ENCODE measurements at regions of chr22 and their contacts with region 1.

Region 1: DNA sequence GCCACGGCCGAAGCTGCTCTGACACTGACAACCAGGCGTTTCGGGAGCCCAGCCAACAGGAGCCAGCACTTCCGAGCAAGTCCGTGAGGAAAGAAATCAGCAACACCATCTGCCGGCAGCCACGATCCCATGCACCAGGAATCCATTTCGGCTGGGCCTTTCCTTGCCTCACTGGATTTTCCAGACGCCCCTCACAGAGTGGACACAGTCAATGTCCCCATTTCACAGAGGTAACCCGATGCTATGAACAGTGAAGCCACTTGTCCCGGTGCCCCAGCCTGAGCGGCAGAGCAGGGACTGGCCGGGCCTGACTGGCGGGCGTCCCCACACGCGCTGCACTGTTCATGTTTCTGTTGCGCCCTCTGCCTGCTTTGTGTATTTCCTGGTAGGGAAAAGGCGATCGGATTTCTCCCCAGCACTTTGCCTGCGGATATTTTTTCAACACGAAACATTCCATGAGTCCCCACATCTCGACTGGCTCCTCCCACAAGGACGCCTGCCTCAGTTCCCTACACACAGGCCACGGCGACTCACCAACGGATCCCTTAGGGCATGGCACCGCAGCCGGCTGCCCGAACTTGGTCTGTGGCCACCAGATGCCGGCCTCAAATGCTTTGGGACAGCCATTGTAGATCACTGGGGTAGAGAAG is 55.3 kb downstream of the TRMU start:
- DNase-seq: peak; percentile 81 to 95 (median 86)
- ATAC-seq: peak; percentile 90 to 95 (median 95)
- H3K4me3 ChIP-seq: peak overlapping the region in 1 of 4 donors; percentile 22
- H3K27ac ChIP-seq: peak overlapping the region; percentile 47 to 61 (median 48)
- H3K4me1 ChIP-seq: peaks cover 0 to 5% (median 0%) of the 10 kb centered on the region in 3 donors
- H3K27me3 ChIP-seq: no peaks in the 10 kb centered on the region
- CTCF ChIP-seq: peak; percentile 17 to 54 (median 36)

Region 2: GRCh38 chr22:46355371-46355995 is 35.3 kb before region 1 on chr22:
- intact Hi-C with region 1: loop called in 1 of 3 experiments (anchors 5 kb)
- DNase-seq: peak; percentile 46 to 89 (median 78)
- ATAC-seq: peak; percentile 26 to 46 (median 34)
- H3K4me3 ChIP-seq: no peak overlapping the region
- H3K27ac ChIP-seq: no peak overlapping the region
- H3K4me1 ChIP-seq: peaks cover 7 to 13% (median 10%) of the 10 kb centered on the region in 3 donors
- H3K27me3 ChIP-seq: no peaks in the 10 kb centered on the region
- CTCF ChIP-seq: peak; percentile 67 to 73 (median 68)

Measured in pancreas (tissue), 10 donors.